CD8-positive, alpha-beta memory T cell (primary cell): ENCODE measurements at regions of chr11 and their contacts with region 1.

Region 1: DNA sequence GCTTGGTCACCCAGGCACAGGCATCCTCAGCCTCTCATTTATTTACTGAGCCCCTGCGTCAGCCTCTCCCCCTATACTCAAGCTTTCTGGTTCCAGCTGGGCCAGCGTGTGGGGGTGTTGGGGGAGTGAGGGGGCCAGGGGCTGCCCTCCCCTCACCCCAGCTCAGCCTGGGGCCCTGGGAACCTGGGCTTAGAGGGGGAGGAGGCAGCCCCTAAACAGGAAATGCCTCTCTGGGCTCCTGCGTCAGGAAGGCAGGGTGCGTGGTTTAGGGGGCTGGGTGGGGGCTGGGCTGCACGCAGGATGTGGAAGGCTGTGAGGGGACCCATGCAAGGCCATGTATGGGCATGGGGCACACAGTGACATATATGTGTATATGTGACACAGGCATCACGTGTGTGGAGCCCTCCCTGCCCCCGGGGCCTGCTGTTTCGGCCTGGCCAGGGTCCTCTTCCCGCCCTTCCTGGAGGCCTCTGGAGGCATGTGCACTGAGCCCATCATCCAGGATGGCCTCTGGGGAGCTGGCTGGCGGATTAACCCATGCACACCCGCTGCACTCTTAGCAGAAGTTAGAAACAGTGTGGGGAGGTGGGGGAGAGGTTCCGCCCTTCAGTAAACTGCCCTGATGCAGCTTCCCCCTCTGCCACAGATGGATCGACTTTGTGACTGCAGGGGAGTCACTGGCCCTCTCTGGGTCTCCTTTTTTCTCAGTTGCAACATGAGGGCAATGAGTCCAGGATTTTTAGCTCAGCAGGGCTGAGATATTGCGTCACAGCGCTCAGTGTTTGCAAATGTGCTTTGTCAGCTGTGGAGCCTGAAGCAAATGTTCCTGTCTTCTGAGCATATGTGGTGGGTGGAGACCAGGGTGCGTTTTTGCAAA is 1.1 kb upstream of the CD248 start:
- DNase-seq: peak; percentile 57 to 95 (median 85)
- H3K4me3 ChIP-seq: peak overlapping the region; percentile 56
- H3K4me3 Mint-ChIP-seq: peak overlapping the region; percentile 66 to 89 (median 77)
- H3K27ac ChIP-seq: peak overlapping the region; percentile 73
- H3K27ac Mint-ChIP-seq: peak overlapping the region; percentile 97 to 99 (median 98)
- H3K4me1 ChIP-seq: peaks cover 58% of the 10 kb centered on the region
- H3K4me1 Mint-ChIP-seq: peaks cover 53 to 68% (median 53%) of the 10 kb centered on the region in 3 donors
- H3K27me3 ChIP-seq: no peaks in the 10 kb centered on the region
- H3K27me3 Mint-ChIP-seq: no peaks in the 10 kb centered on the region

Region 2: GRCh38 chr11:66328307-66329144 is 10.6 kb after region 1 on chr11:
- CTCF ChIA-PET with region 1: interaction called, 47 read pairs
- POLR2A ChIA-PET with region 1: interaction called, 10 read pairs
- DNase-seq: peak; percentile 70 to 85 (median 79)
- H3K4me3 ChIP-seq: peak overlapping the region; percentile 38
- H3K4me3 Mint-ChIP-seq: peak overlapping the region; percentile 15 to 70 (median 57)
- H3K27ac ChIP-seq: peak overlapping the region; percentile 22
- H3K27ac Mint-ChIP-seq: peak overlapping the region; percentile 79 to 94 (median 92)
- H3K4me1 ChIP-seq: peaks cover 40% of the 10 kb centered on the region
- H3K4me1 Mint-ChIP-seq: peaks cover 35 to 51% (median 37%) of the 10 kb centered on the region in 3 donors
- H3K27me3 ChIP-seq: no peaks in the 10 kb centered on the region
- H3K27me3 Mint-ChIP-seq: peaks cover 0 to 3% of the 10 kb centered on the region in 2 donors